ENCODE measurements at regions of chr2 and their contacts with region 1.

Region 1: DNA sequence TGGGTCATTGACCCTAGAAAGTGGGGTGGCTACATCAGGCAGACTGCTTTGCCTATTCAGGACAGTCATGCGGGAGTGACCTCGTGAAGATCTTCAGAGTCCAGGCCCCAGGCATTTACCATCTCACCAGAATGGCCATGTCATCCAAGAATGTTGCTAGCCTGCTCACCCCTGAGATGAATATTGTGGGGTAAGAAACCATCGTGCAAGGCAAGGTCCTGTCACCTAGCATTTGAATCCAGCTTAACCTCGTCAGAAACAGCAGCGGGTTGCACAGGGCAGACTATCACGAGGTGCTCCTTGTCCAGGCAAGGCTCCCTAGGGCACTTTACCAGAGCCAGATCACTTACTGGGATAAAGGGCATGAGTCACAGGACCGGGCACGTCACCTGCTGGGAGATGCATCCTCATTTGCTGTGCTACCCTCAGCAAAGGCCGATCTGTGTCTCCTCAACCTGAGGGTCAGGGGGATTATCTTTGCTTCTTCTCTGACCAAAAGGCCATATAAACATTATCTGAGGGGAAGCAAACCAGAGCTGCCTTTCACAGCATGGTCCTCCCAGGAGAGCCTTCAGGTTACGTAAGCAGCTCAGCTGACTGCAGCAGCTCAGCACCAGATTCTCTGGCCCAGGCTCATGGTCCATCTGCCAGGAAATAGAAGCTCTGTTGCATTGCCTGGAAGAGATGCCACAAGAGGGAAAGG is 162.4 kb downstream of the ACKR3 start:
- DNase-seq: peak; percentile 95
- H3K4me3 ChIP-seq: no peak overlapping the region
- H3K27ac ChIP-seq: peak overlapping the region; percentile 39 to 79 (median 67)
- H3K4me1 ChIP-seq: peaks cover 0 to 25% (median 15%) of the 10 kb centered on the region in 4 donors
- H3K27me3 ChIP-seq: no peaks in the 10 kb centered on the region
- CTCF ChIP-seq: no peak
- EP300 ChIP-seq: peak; percentile 72 to 97 (median 78)
- POLR2A ChIP-seq: no peak

Region 2: GRCh38 chr2:235142601-235143000 is 1589.4 kb before region 1 on chr2:
- intact Hi-C with region 1: no loop called
- DNase-seq: no peak
- H3K4me3 ChIP-seq: no peak overlapping the region
- H3K27ac ChIP-seq: no peak overlapping the region
- H3K4me1 ChIP-seq: no peaks in the 10 kb centered on the region
- H3K27me3 ChIP-seq: no peaks in the 10 kb centered on the region
- CTCF ChIP-seq: no peak
- EP300 ChIP-seq: no peak
- POLR2A ChIP-seq: no peak

Region 3: GRCh38 chr2:236507393-236508085 is 224.5 kb before region 1 on chr2:
- intact Hi-C with region 1: loop called (anchors 10 kb)
- DNase-seq: peak; percentile 77
- H3K4me3 ChIP-seq: peak overlapping the region; percentile 4 to 51 (median 45)
- H3K27ac ChIP-seq: no peak overlapping the region
- H3K4me1 ChIP-seq: peaks cover 0 to 10% (median 7%) of the 10 kb centered on the region in 4 donors
- H3K27me3 ChIP-seq: peaks cover 0 to 11% (median 5%) of the 10 kb centered on the region in 3 donors
- CTCF ChIP-seq: no peak
- EP300 ChIP-seq: no peak
- POLR2A ChIP-seq: no peak

Region 4: DNA sequence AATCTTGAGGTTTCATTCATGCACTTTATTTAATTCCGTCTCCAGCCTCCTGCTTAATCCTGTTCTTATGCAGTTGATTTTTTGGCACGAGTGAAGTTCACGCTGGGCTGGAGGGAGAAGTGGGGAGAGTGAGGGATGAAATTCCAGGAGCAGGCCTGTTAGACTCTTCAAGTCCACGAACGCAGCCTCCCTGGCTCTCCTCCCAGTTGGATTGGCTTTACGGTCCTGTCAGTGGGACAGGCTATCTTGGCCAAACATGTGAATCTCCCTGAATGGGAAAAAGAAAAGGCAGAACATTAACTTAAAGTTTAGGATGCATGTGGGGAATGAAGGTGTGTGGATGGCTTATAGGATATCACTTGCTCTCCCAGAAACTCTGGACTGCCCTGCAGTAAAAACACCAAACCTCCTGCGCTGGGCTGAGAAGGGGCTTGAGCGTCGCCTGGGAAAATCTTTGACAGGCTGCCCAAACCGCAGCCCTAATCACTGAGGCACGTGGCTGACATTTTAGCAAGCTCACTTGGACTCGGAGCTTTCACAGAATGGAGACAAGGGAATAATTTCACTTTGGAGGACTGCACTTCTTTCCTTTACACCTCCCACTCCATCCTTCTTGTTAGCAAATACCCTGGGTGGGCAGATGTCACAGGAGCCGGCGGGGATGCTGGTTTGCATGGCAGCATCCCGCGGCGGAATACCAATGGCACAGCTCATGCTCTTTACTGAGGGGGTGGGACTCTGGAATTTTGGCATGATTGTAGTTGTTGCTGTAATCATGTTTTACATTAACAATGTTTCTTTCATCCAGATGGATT is 68.5 kb before region 1 on chr2:
- intact Hi-C with region 1: loop called (anchors 1 kb)
- DNase-seq: peak; percentile 94
- H3K4me3 ChIP-seq: no peak overlapping the region
- H3K27ac ChIP-seq: peak overlapping the region; percentile 61 to 82 (median 76)
- H3K4me1 ChIP-seq: peaks cover 0 to 53% (median 49%) of the 10 kb centered on the region in 4 donors
- H3K27me3 ChIP-seq: no peaks in the 10 kb centered on the region
- CTCF ChIP-seq: no peak
- EP300 ChIP-seq: peak in 3 of 4 donors; percentile 7 to 63 (median 16)
- POLR2A ChIP-seq: no peak